ENCODE measurements at regions of chr5 and their contacts with region 1.

Region 1: GRCh38 chr5:3456121-3456681 is 139.4 kb upstream of the IRX1 start:
- DNase-seq: no peak
- ATAC-seq: no peak
- H3K4me3 ChIP-seq: no peak overlapping the region
- H3K4me3 Mint-ChIP-seq: no peak overlapping the region
- H3K27ac ChIP-seq: no peak overlapping the region
- H3K27ac Mint-ChIP-seq: no peak overlapping the region
- H3K4me1 ChIP-seq: no peaks in the 10 kb centered on the region
- H3K4me1 Mint-ChIP-seq: peaks cover 0 to 1% (median 0%) of the 10 kb centered on the region in 7 donors
- H3K27me3 ChIP-seq: no peaks in the 10 kb centered on the region
- H3K27me3 Mint-ChIP-seq: peaks cover 0 to 10% (median 0%) of the 10 kb centered on the region in 5 donors

Region 2: DNA sequence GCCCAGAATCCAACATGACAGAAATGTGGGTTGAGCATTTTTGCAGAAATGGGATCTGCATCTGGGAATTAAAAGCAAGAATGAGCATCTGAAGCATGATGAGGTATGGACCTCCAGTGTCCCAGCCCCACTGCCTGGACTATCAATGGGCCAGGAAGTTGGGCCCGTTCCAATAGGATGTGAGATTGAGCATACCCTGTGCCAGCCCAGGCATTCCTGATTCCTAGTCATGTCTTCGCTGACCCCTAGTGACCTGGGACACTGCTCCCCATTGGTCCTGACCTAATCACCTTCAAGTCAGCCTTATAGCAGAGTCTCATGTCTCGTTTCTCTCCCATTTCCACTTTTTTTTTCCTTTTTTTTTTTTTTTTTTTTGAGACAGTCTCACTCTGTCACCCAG is 507.3 kb before region 1 on chr5:
- CTCF ChIA-PET with region 1: no interaction called
- POLR2A ChIA-PET with region 1: no interaction called
- intact Hi-C with region 1: loop called in 1 of 2 experiments (anchors 5 kb)
- DNase-seq: no peak
- ATAC-seq: no peak
- H3K4me3 ChIP-seq: no peak overlapping the region
- H3K4me3 Mint-ChIP-seq: no peak overlapping the region
- H3K27ac ChIP-seq: no peak overlapping the region
- H3K27ac Mint-ChIP-seq: no peak overlapping the region
- H3K4me1 ChIP-seq: no peaks in the 10 kb centered on the region
- H3K4me1 Mint-ChIP-seq: no peaks in the 10 kb centered on the region
- H3K27me3 ChIP-seq: no peaks in the 10 kb centered on the region
- H3K27me3 Mint-ChIP-seq: no peaks in the 10 kb centered on the region

Region 3: GRCh38 chr5:4230786-4231641 is 774.8 kb after region 1 on chr5:
- CTCF ChIA-PET with region 1: no interaction called
- POLR2A ChIA-PET with region 1: no interaction called
- intact Hi-C with region 1: no loop called
- DNase-seq: no peak
- ATAC-seq: no peak
- H3K4me3 ChIP-seq: no peak overlapping the region
- H3K4me3 Mint-ChIP-seq: no peak overlapping the region
- H3K27ac ChIP-seq: no peak overlapping the region
- H3K27ac Mint-ChIP-seq: no peak overlapping the region
- H3K4me1 ChIP-seq: no peaks in the 10 kb centered on the region
- H3K4me1 Mint-ChIP-seq: no peaks in the 10 kb centered on the region
- H3K27me3 ChIP-seq: no peaks in the 10 kb centered on the region
- H3K27me3 Mint-ChIP-seq: no peaks in the 10 kb centered on the region

Measured in naive thymus-derived CD4-positive, alpha-beta T cell (primary cell).